ENCODE measurements at regions of chr13 and their contacts with region 1.

Region 1: DNA sequence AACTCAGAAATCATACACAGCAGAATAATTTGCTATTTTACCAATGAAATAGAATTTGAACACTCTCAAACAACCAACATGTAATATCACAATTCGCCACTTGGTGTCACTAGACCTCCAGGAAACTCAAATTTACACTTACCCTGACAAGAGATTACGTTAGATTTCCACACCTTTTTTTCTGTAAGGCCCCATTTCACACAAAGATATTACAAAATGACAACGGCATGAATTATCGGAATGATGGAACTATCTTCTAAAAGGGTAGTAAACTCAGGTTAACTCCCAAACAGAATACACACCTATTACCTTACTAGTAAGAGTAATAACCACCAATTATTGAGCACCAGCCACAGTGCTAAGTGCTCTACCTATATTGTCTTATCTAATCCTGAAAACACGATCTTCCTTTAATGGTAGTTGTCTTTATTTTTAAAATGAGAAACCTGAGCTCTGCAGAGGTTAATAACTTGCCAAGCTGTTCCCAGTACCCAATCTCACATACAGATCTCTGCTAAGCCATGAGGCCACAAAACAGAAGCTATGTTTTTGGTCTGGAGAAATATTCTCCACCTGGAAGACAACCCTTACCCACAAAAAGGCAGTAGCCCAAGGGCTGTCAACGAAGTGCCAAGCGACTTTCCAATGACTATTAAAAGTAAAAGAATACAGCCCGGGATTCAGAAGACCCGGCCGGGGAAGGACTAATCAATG is 152.4 kb downstream of the DCLK1 start:
- DNase-seq: peak in 1 of 5 donors; percentile 37
- ATAC-seq: peak in 2 of 4 donors; percentile 46 to 69
- H3K4me3 ChIP-seq: peak overlapping the region in 4 of 12 donors; percentile 2 to 19 (median 10)
- H3K27ac ChIP-seq: peak overlapping the region in 11 of 12 donors; percentile 36 to 81 (median 67)
- H3K4me1 ChIP-seq: peaks cover 0 to 17% (median 8%) of the 10 kb centered on the region in 12 donors
- H3K27me3 ChIP-seq: no peaks in the 10 kb centered on the region
- CTCF ChIP-seq: peak; percentile 71 to 94 (median 85)
- POLR2A ChIP-seq: no peak

Region 2: GRCh38 chr13:36131222-36131930 is 152.6 kb after region 1 on chr13 and contains the start of gene DCLK1:
- intact Hi-C with region 1: loop called in 2 of 10 experiments (anchors 5 to 10 kb)
- DNase-seq: peak; percentile 65 to 81 (median 73)
- ATAC-seq: peak; percentile 60 to 87 (median 78)
- H3K4me3 ChIP-seq: peak within 1 kb of the TSS; percentile 29 to 88 (median 57)
- H3K27ac ChIP-seq: peak within 1 kb of the TSS in 11 of 12 donors; percentile 29 to 65 (median 55)
- H3K4me1 ChIP-seq: peaks cover 0 to 33% (median 10%) of the 10 kb centered on the region in 12 donors
- H3K27me3 ChIP-seq: peaks cover 0 to 12% (median 0%) of the 10 kb centered on the region in 9 donors
- CTCF ChIP-seq: peak in 1 of 12 donors; percentile 14
- POLR2A ChIP-seq: no peak
- total RNA-seq, gene DCLK1: 6.1 to 15.9 (median 11.6) TPM

Region 3: GRCh38 chr13:36207672-36208071 is 228.9 kb after region 1 on chr13:
- intact Hi-C with region 1: loop called in 2 of 10 experiments (anchors 2 to 10 kb)
- DNase-seq: no peak
- ATAC-seq: no peak
- H3K4me3 ChIP-seq: no peak overlapping the region
- H3K27ac ChIP-seq: no peak overlapping the region
- H3K4me1 ChIP-seq: no peaks in the 10 kb centered on the region
- H3K27me3 ChIP-seq: no peaks in the 10 kb centered on the region
- CTCF ChIP-seq: peak in 2 of 12 donors; percentile 18 to 26
- POLR2A ChIP-seq: no peak

Region 4: GRCh38 chr13:36275190-36276002 is 296.6 kb after region 1 on chr13:
- intact Hi-C with region 1: loop called (anchors 1 to 2 kb)
- DNase-seq: no peak
- ATAC-seq: peak in 3 of 4 donors; percentile 39 to 59 (median 42)
- H3K4me3 ChIP-seq: no peak overlapping the region
- H3K27ac ChIP-seq: no peak overlapping the region
- H3K4me1 ChIP-seq: peaks cover 0 to 3% (median 0%) of the 10 kb centered on the region in 12 donors
- H3K27me3 ChIP-seq: no peaks in the 10 kb centered on the region
- CTCF ChIP-seq: peak; percentile 48 to 79 (median 64)
- POLR2A ChIP-seq: no peak

Region 5: GRCh38 chr13:36724141-36724540 is 745.4 kb after region 1 on chr13:
- intact Hi-C with region 1: loop called in 1 of 10 experiments (anchors 10 kb)
- DNase-seq: no peak
- ATAC-seq: no peak
- H3K4me3 ChIP-seq: no peak overlapping the region
- H3K27ac ChIP-seq: no peak overlapping the region
- H3K4me1 ChIP-seq: no peaks in the 10 kb centered on the region
- H3K27me3 ChIP-seq: peaks cover 0 to 3% (median 0%) of the 10 kb centered on the region in 9 donors
- CTCF ChIP-seq: no peak
- POLR2A ChIP-seq: no peak